A549 (cell line): ENCODE measurements at regions of chr10 and their contacts with region 1.

Region 1: DNA sequence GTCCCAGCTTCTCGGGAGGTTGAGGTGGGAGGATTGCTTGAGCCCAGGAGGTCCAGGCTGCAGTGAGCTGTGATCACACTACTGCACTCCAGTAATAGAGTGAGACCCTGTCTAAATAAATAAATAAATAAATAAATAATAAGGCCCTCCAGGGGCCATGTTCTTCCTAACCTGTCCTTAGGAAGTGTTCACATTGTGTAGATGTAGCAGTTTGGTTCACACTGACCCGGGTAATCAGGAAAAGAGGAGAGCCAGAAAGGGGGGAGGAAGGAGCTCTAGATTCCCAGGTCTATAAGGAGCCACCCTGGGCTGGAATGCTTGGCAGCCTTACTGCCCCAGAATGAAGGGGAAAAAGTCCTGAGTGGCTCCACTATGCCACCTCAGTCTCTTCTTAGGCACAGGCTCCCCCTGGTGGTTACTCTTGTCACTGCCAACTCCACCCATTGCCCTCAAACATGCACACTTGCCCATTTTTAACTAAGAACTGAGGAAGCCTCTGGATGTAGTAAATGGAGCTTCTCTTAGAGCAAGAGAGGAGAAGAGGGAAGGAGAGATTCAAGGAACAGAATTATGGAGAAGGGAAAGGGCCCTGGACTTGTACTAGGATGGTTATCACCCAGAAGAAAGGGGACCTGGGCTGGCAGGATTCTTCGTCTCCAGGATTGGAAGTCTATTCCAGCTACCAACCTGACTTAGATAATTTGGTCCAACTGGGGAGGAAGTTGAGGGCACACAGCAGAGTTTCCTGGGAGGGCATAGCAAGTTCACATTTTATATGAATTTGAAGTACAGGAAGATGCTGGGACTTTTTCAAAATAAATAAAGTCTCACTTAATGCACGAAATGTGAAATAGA is 7.8 kb downstream of the HPS6 start:
- DNase-seq: peak; percentile 81 to 82
- ATAC-seq: peak; percentile 91 to 96
- H3K4me3 ChIP-seq: no peak overlapping the region
- H3K27ac ChIP-seq: no peak overlapping the region
- H3K4me1 ChIP-seq: 0 out of 3 replicates have a peak, but pooled peaks cover 2% of the 10 kb centered on the region
- CTCF ChIP-seq: peak; percentile 89
- EP300 ChIP-seq: no peak
- POLR2A ChIP-seq: no peak
- RAD21 ChIP-seq: peak; percentile 82 to 86

Region 2: DNA sequence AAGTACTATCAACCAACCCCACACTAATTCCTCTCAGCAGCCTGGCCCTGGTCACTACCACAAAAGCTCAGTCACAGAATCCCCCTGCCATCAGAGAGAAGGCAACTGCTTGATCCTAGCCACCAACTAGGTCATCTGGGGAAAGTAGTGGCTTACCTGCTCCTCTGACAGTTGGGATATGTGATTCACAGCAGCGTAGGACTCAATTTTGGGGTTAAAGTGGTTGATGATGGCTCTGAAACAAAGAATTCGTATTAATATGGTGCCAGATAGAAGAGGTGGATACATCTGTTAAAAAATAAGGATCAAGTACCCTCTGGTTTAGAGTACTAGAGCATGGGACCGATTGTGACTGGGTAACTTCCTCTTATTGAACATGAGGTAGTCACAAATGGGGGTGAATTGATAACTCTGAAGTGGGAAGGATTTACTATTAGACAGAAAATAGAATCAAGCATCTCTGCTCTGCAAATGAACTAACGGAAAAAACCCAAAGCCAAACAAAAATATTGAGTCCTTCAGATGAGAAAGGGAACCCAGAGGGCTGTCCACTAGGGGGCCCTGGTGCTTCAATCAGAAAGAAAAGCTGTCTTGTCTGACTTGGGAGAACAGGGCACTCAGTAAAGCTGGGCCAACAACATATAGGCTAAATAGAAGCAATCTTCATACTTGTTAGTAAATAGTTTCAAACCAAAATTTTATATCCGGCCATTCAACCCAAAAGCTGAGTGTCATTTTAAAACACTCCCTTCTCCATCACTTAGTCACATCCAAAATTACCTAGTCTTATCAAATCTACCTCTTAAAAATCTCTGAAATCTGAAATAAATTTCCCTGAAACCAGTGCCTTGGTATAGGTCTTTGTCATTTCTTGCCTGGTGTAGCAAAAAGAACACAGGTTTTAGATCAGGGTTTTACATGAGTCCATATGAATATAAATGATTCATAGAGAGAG is 183.4 kb before region 1 on chr10:
- CTCF ChIA-PET with region 1: interaction called, 18 read pairs
- POLR2A ChIA-PET with region 1: no interaction called
- DNase-seq: peak; percentile 69 to 73
- ATAC-seq: peak; percentile 93; a peak in 5 of 6 replicates
- H3K4me3 ChIP-seq: no peak overlapping the region
- H3K27ac ChIP-seq: peak overlapping the region; percentile 31 to 65; a peak in 2 of 6 replicates
- H3K4me1 ChIP-seq: peaks cover 12% of the 10 kb centered on the region
- CTCF ChIP-seq: peak; percentile 93
- EP300 ChIP-seq: no peak
- POLR2A ChIP-seq: no peak
- RAD21 ChIP-seq: peak; percentile 83 to 89

Region 3: GRCh38 chr10:102055647-102056419 is 17.1 kb before region 1 on chr10 and contains the start of gene ARMH3:
- CTCF ChIA-PET with region 1: interaction called, 43 read pairs
- POLR2A ChIA-PET with region 1: interaction called, 4 read pairs
- DNase-seq: peak; percentile 99
- ATAC-seq: peak; percentile 98
- H3K4me3 ChIP-seq: peak within 1 kb of the TSS; percentile 87
- H3K27ac ChIP-seq: peak within 1 kb of the TSS; percentile 93 to 95
- H3K4me1 ChIP-seq: peaks cover 31% of the 10 kb centered on the region
- CTCF ChIP-seq: no peak
- EP300 ChIP-seq: no peak
- POLR2A ChIP-seq: peak; percentile 33
- RAD21 ChIP-seq: no peak
- polyA plus RNA-seq, gene ARMH3: 17.3 and 20.1 TPM in 2 replicates

Region 4: DNA sequence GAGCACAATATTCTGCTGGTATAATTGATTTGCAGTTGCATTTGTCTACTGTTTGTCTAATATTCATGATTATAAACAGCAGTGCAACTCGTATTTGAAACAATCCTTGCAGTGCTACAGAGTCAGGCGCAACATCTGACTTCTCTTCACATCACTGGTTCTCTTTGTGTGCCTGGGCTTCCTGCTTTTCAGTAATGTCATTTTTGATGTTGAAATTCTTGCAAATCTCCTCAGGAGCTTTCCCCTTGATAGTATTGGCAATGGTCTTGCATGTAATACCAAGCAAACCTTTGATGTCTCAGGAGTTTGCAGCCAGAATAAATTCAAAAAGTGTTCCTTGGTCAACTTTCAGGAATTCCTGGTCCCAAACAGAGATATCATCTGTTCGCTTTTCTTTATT is 12.4 kb after region 1 on chr10:
- CTCF ChIA-PET with region 1: interaction called, 51 read pairs
- POLR2A ChIA-PET with region 1: no interaction called
- DNase-seq: no peak
- ATAC-seq: no peak
- H3K4me3 ChIP-seq: no peak overlapping the region
- H3K27ac ChIP-seq: no peak overlapping the region
- H3K4me1 ChIP-seq: no peaks in the 10 kb centered on the region
- CTCF ChIP-seq: no peak
- EP300 ChIP-seq: no peak
- POLR2A ChIP-seq: no peak
- RAD21 ChIP-seq: no peak

Region 5: GRCh38 chr10:102101152-102101551 is 28.3 kb after region 1 on chr10:
- CTCF ChIA-PET with region 1: interaction called, 64 read pairs
- POLR2A ChIA-PET with region 1: no interaction called
- DNase-seq: peak in 1 of 2 experiments; percentile 57
- ATAC-seq: peak; percentile 80 to 93
- H3K4me3 ChIP-seq: no peak overlapping the region
- H3K27ac ChIP-seq: no peak overlapping the region
- H3K4me1 ChIP-seq: no peaks in the 10 kb centered on the region
- CTCF ChIP-seq: no peak
- EP300 ChIP-seq: no peak
- POLR2A ChIP-seq: no peak
- RAD21 ChIP-seq: peak in 1 of 2 experiments; percentile 24; a peak in 1 of 5 replicates

Region 6: DNA sequence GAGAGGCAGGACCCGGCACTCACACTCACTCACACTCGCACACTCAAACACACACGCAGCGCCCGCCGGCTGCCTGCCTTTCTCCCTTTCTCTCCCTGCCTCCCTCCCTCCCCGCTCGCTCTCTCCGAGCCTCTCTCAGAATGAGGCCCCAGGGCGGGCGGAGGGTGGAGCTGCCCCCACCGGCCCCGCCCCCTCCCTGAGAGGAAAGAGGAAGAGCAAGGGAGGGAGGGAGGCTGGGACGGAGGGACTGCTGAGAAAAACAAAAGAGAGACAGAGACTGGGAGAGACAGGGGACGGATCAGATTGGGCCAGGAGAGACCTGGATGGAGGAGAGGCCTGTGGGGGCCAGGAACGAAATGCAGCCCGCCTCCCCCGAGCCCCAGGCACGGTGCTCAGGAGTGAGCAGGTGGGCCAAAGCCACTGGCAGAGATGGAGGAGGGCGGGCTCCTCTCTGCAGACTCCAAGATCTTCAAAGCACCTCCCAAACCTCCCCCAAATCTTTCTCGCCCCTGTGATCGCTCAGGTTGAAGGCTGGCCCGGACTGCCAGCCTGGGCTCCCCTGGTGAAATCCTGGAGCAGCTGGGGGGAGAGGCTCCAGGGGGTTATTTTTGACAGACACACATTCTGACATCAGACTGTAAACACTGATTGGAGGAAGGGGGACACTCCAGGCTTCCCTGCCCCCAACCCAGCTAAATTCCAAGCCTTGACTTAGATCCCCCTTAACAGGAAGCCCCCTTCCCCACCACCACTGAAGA is 42.1 kb after region 1 on chr10:
- CTCF ChIA-PET with region 1: interaction called, 64 read pairs
- POLR2A ChIA-PET with region 1: interaction called, 4 read pairs
- DNase-seq: peak; percentile 73 to 76
- ATAC-seq: peak; percentile 67 to 87
- H3K4me3 ChIP-seq: peak overlapping the region; percentile 90
- H3K27ac ChIP-seq: peak overlapping the region; percentile 95 to 96
- H3K4me1 ChIP-seq: peaks cover 63% of the 10 kb centered on the region
- CTCF ChIP-seq: no peak
- EP300 ChIP-seq: no peak
- POLR2A ChIP-seq: peak; percentile 95
- RAD21 ChIP-seq: no peak

Region 7: DNA sequence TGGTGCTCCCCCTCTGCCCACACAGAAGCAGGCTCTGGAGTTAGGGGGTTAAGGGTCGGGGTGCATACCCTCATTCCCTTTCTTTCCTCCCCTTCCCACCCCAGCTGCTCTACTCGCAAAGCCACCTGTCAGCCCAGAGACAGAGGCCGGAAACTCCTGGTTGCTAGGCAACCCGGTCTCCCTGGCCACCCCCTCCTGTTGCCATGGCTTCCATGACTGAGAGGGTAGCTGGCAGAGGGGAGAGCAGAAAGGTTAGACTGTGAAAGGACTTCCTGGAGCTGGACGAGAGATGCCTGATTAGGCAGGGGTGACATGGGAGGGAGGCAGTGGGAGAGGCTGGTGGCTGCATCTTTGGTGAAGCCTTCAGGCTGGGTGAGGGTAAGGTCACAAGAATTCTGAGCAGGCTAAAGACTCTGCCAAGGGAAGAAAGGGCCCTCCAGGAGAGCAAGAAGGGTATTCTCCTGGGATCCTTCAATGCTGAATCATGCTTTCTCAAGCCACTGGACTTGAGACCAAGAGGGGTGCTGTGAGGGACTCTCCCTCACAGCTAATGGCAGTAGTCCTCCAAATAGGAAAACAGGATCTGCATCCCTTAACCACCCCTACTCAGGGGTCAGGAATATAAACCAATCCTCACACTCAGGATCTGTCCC is 340.3 kb after region 1 on chr10:
- CTCF ChIA-PET with region 1: no interaction called
- POLR2A ChIA-PET with region 1: no interaction called
- DNase-seq: peak in 1 of 2 experiments; percentile 31
- ATAC-seq: no peak
- H3K4me3 ChIP-seq: no peak overlapping the region
- H3K27ac ChIP-seq: no peak overlapping the region
- H3K4me1 ChIP-seq: peaks cover 3% of the 10 kb centered on the region; the same call in 1 of the 3 replicates
- CTCF ChIP-seq: no peak
- EP300 ChIP-seq: no peak
- POLR2A ChIP-seq: no peak
- RAD21 ChIP-seq: no peak

Region 8: GRCh38 chr10:103225939-103226338 is 1153.0 kb after region 1 on chr10:
- CTCF ChIA-PET with region 1: no interaction called
- POLR2A ChIA-PET with region 1: no interaction called
- DNase-seq: no peak
- ATAC-seq: no peak
- H3K4me3 ChIP-seq: no peak overlapping the region
- H3K27ac ChIP-seq: peak overlapping the region; percentile 13 to 96; a peak in 3 of 6 replicates
- H3K4me1 ChIP-seq: peaks cover 38% of the 10 kb centered on the region
- CTCF ChIP-seq: no peak
- EP300 ChIP-seq: no peak
- POLR2A ChIP-seq: no peak
- RAD21 ChIP-seq: no peak